CD4-positive, alpha-beta memory T cell (primary cell): ENCODE measurements at regions of chr21 and their contacts with region 1.

Region 1: DNA sequence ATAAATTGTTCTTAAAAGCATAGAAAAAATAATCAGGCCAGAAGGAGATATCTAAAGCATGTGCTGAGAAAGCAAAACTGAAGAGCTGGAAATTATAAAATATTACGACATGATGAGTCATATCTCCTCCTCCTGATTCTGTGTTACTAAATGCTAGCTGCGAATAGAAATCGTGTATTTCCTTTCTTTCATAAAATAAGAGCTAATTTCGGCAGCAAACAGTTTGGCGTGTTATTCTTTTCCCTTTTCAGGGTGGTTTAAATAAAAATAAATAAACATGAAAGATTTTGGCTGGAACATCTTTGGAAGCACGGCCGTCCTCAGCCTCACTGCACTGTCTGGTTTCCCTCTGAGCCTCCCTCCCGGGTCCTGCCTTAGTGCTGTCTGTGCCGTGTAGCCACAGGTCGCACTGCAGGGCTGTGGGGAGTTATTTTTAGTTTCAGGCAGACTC is 56.0 kb downstream of the ADARB1 start:
- DNase-seq: no peak
- H3K4me3 ChIP-seq: no peak overlapping the region
- H3K4me3 Mint-ChIP-seq: no peak overlapping the region
- H3K27ac ChIP-seq: no peak overlapping the region
- H3K27ac Mint-ChIP-seq: no peak overlapping the region
- H3K4me1 ChIP-seq: no peaks in the 10 kb centered on the region
- H3K4me1 Mint-ChIP-seq: peaks cover 16 to 34% (median 24%) of the 10 kb centered on the region in 4 donors
- H3K27me3 ChIP-seq: no peaks in the 10 kb centered on the region
- H3K27me3 Mint-ChIP-seq: no peaks in the 10 kb centered on the region

Region 2: GRCh38 chr21:44939532-44940115 is 190.7 kb before region 1 on chr21 and contains the start of gene SLX9:
- CTCF ChIA-PET with region 1: interaction called, 363 read pairs
- POLR2A ChIA-PET with region 1: no interaction called
- intact Hi-C with region 1: no loop called
- DNase-seq: peak; percentile 69 to 82 (median 76)
- H3K4me3 ChIP-seq: peak within 1 kb of the TSS; percentile 36 to 57
- H3K4me3 Mint-ChIP-seq: peak within 1 kb of the TSS; percentile 86 to 97 (median 90)
- H3K27ac ChIP-seq: peak within 1 kb of the TSS; percentile 46
- H3K27ac Mint-ChIP-seq: peak within 1 kb of the TSS; percentile 53 to 96 (median 88)
- H3K4me1 ChIP-seq: peaks cover 38% of the 10 kb centered on the region
- H3K4me1 Mint-ChIP-seq: peaks cover 23 to 56% (median 40%) of the 10 kb centered on the region in 4 donors
- H3K27me3 ChIP-seq: no peaks in the 10 kb centered on the region
- H3K27me3 Mint-ChIP-seq: no peaks in the 10 kb centered on the region
- total RNA-seq, gene SLX9: 17.7 to 21.6 TPM

Region 3: DNA sequence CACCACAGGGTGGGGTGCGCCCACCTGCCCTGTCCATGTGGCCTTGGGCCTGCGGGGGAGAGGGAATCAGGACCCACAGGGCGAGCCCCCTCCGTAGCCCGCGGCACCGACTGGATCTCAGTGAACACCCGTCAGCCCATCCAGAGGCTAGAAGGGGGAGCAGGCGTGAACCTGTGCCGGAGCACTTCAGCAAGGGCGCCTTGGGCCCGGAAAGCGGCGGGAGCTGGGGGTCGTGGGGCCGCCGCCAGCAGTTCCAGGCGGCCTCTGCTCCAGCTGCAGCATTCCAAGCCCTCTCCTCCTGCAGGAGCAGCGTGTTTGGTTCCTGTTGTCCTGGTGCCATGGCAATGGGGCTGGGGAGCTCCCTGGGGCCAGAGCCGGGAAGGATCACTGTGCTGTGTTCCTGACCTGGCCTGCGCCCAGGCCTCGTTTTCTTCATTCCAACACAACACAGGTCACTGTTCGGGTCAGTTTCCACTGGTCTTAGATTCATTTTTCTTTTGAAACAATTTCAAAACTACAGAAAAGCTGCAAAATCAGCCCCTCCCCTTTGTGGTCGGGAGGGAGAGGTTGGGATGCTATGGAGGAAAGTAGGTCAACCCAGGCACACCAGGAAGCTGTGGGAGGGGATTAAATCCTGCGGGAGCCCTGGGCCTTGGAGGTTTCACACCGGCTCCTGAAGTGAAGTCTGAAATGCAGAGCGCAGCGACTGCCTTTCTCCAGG is 171.7 kb before region 1 on chr21:
- CTCF ChIA-PET with region 1: interaction called, 363 read pairs
- POLR2A ChIA-PET with region 1: interaction called, 4 read pairs
- intact Hi-C with region 1: no loop called
- DNase-seq: no peak
- H3K4me3 ChIP-seq: no peak overlapping the region
- H3K4me3 Mint-ChIP-seq: no peak overlapping the region
- H3K27ac ChIP-seq: no peak overlapping the region
- H3K27ac Mint-ChIP-seq: no peak overlapping the region
- H3K4me1 ChIP-seq: no peaks in the 10 kb centered on the region
- H3K4me1 Mint-ChIP-seq: peaks cover 6 to 8% (median 7%) of the 10 kb centered on the region in 4 donors
- H3K27me3 ChIP-seq: no peaks in the 10 kb centered on the region
- H3K27me3 Mint-ChIP-seq: no peaks in the 10 kb centered on the region

Region 4: DNA sequence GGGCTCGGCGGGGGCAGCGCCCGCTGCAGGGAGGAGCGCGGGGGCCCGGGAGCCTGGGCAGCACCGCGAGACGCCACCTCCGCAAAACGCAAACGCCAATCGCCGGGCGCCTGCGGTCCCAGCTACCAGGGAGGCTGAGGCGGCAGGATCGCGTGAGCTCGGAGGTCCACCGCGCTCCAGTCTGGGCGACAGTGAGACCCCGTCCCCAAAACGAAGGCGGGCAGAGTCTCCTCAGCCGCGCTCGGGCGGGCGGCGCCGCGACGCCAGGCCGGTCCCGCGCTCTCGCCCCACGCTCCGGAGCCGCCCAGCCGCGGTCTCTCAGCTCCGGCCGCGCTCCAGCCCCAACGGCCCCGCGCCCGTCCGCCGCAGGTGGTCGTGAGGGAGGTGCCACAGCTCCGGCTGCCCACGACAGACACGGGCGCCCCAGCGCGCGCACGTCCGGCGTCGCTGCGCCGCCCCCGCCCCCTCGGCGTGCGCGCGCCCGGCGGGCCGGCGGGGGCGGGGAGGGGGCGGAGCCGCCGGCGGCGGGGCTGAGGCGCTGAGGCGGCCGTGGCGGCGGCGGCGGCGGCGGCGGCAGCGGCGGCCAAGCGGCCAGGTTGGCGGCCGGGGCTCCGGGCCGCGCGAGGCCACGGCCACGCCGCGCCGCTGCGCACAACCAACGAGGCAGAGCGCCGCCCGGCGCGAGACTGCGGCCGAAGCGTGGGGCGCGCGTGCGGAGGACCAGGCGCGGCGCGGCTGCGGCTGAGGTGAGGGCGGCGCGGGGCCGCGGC is 56.1 kb before region 1 on chr21 and contains the start of gene ADARB1:
- CTCF ChIA-PET with region 1: interaction called, 65 read pairs
- POLR2A ChIA-PET with region 1: interaction called, 12 read pairs
- intact Hi-C with region 1: loop called (anchors 1 kb)
- DNase-seq: peak in 4 of 5 donors; percentile 65 to 79 (median 72)
- H3K4me3 ChIP-seq: peak within 1 kb of the TSS; percentile 18 to 52
- H3K4me3 Mint-ChIP-seq: peak within 1 kb of the TSS; percentile 92 to 99 (median 96)
- H3K27ac ChIP-seq: peak within 1 kb of the TSS; percentile 64
- H3K27ac Mint-ChIP-seq: peak within 1 kb of the TSS; percentile 92 to 99 (median 97)
- H3K4me1 ChIP-seq: peaks cover 44% of the 10 kb centered on the region
- H3K4me1 Mint-ChIP-seq: peaks cover 33 to 46% (median 39%) of the 10 kb centered on the region in 4 donors
- H3K27me3 ChIP-seq: no peaks in the 10 kb centered on the region
- H3K27me3 Mint-ChIP-seq: no peaks in the 10 kb centered on the region
- total RNA-seq, gene ADARB1: 49.7 to 50.0 TPM

Region 5: GRCh38 chr21:45102391-45102932 is 27.9 kb before region 1 on chr21:
- CTCF ChIA-PET with region 1: interaction called, 13 read pairs
- POLR2A ChIA-PET with region 1: interaction called, 3 read pairs
- intact Hi-C with region 1: no loop called
- DNase-seq: no peak
- H3K4me3 ChIP-seq: no peak overlapping the region
- H3K4me3 Mint-ChIP-seq: peak overlapping the region in 3 of 8 donors; percentile 15 to 26 (median 25)
- H3K27ac ChIP-seq: no peak overlapping the region
- H3K27ac Mint-ChIP-seq: peak overlapping the region in 1 of 7 donors; percentile 43
- H3K4me1 ChIP-seq: peaks cover 43% of the 10 kb centered on the region
- H3K4me1 Mint-ChIP-seq: peaks cover 50 to 78% (median 63%) of the 10 kb centered on the region in 4 donors
- H3K27me3 ChIP-seq: no peaks in the 10 kb centered on the region
- H3K27me3 Mint-ChIP-seq: no peaks in the 10 kb centered on the region

Region 6: GRCh38 chr21:45287438-45288391 is 157.4 kb after region 1 on chr21 and contains the start of gene POFUT2:
- CTCF ChIA-PET with region 1: no interaction called
- POLR2A ChIA-PET with region 1: no interaction called
- intact Hi-C with region 1: no loop called
- DNase-seq: peak; percentile 95 to 100 (median 98)
- H3K4me3 ChIP-seq: peak within 1 kb of the TSS in 1 of 2 donors; percentile 63
- H3K4me3 Mint-ChIP-seq: peak within 1 kb of the TSS; percentile 78 to 96 (median 84)
- H3K27ac ChIP-seq: peak within 1 kb of the TSS; percentile 78
- H3K27ac Mint-ChIP-seq: peak within 1 kb of the TSS; percentile 87 to 97 (median 93)
- H3K4me1 ChIP-seq: peaks cover 14% of the 10 kb centered on the region
- H3K4me1 Mint-ChIP-seq: peaks cover 12 to 46% (median 24%) of the 10 kb centered on the region in 4 donors
- H3K27me3 ChIP-seq: no peaks in the 10 kb centered on the region
- H3K27me3 Mint-ChIP-seq: no peaks in the 10 kb centered on the region
- total RNA-seq, gene POFUT2: 40.1 to 40.8 TPM

Region 7: GRCh38 chr21:45404730-45405270 is 274.5 kb after region 1 on chr21 and contains the start of gene COL18A1:
- CTCF ChIA-PET with region 1: no interaction called
- POLR2A ChIA-PET with region 1: no interaction called
- intact Hi-C with region 1: no loop called
- DNase-seq: peak in 2 of 5 donors; percentile 10 to 26
- H3K4me3 ChIP-seq: no peak within 1 kb of the TSS
- H3K4me3 Mint-ChIP-seq: peak within 1 kb of the TSS; percentile 75 to 88 (median 83)
- H3K27ac ChIP-seq: no peak within 1 kb of the TSS
- H3K27ac Mint-ChIP-seq: no peak within 1 kb of the TSS
- H3K4me1 ChIP-seq: peaks cover 11% of the 10 kb centered on the region
- H3K4me1 Mint-ChIP-seq: peaks cover 6 to 20% (median 14%) of the 10 kb centered on the region in 4 donors
- H3K27me3 ChIP-seq: peaks cover 26% of the 10 kb centered on the region
- H3K27me3 Mint-ChIP-seq: peaks cover 48 to 52% of the 10 kb centered on the region in 2 donors
- total RNA-seq, gene COL18A1: 4.2 to 4.5 TPM

Region 8: GRCh38 chr21:45420061-45420985 is 290.0 kb after region 1 on chr21:
- CTCF ChIA-PET with region 1: no interaction called
- POLR2A ChIA-PET with region 1: no interaction called
- intact Hi-C with region 1: no loop called
- DNase-seq: peak in 1 of 5 donors; percentile 4
- H3K4me3 ChIP-seq: no peak overlapping the region
- H3K4me3 Mint-ChIP-seq: no peak overlapping the region
- H3K27ac ChIP-seq: no peak overlapping the region
- H3K27ac Mint-ChIP-seq: no peak overlapping the region
- H3K4me1 ChIP-seq: no peaks in the 10 kb centered on the region
- H3K4me1 Mint-ChIP-seq: peaks cover 0 to 2% (median 0%) of the 10 kb centered on the region in 4 donors
- H3K27me3 ChIP-seq: no peaks in the 10 kb centered on the region
- H3K27me3 Mint-ChIP-seq: peaks cover 3 to 4% of the 10 kb centered on the region in 2 donors